Activated naive CD4-positive, alpha-beta T cell treated with anti-CD3 and anti-CD28 coated beads for 36 hours (primary cell): ENCODE measurements at regions of chr15 and their contacts with region 1.

Region 1: DNA sequence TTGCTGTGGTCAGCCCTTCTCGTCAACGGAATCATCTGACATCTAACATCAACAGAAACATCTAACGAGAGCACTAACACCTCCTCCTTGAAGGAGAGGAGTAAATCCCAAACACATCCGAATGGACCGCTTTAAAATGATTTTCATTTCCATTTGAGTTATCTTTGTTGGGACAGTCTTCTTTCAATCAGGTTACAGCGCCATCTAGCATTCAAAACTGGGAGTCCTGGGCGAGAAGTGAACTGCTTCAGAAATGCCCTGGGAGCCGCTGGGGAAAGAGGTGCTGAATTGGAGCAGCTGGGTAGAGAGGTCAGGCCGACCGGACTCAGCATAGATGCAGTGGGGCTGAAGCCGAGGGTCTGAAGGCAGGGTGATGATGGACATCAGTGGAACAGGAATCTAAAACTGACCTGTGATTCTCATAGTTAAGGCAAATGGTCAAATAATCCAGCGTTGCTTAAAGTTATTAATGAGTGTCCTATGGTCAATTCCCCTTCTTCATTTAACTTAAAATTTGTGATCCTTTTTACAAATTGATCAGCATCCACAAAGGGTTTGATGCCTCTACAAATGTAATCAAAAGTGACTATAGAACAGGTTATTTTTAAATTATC is 170.0 kb upstream of the NDN start:
- DNase-seq: peak; percentile 27
- H3K4me3 Mint-ChIP-seq: no peak overlapping the region
- H3K27ac Mint-ChIP-seq: no peak overlapping the region
- H3K4me1 Mint-ChIP-seq: no peaks in the 10 kb centered on the region
- H3K27me3 Mint-ChIP-seq: peaks cover 8% of the 10 kb centered on the region

Region 2: DNA sequence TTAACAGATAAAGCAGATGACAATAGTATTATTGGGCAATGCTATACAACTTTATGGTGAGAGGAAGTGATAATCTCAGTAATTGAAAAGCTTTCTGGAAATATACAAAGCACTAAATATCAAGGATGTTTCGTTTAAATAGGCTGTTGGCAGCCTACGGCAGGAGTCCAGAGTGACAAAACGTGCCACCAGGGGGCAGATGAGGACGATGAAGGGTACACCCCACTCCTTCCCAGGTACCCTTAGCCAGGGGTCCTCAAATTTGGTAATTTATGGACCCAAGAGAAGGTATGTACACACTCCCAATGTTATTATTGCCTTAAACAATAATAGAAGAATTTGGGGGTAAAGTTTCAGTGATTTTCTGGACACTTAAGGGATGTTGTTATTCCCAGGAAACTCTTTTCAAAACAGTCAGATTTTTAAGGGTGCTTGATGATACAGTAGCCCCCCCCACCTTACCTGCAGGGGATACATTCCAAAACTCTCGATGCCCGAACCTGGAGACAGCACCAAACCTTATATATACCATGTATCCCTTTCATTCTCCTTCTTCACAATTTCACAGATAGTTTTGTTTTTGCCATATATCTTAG is 208.1 kb before region 1 on chr15:
- CTCF ChIA-PET with region 1: no interaction called
- intact Hi-C with region 1: loop called (anchors 2 kb)
- DNase-seq: peak; percentile 51
- H3K4me3 Mint-ChIP-seq: no peak overlapping the region
- H3K27ac Mint-ChIP-seq: no peak overlapping the region
- H3K4me1 Mint-ChIP-seq: no peaks in the 10 kb centered on the region
- H3K27me3 Mint-ChIP-seq: peaks cover 14% of the 10 kb centered on the region